ENCODE measurements at regions of chr3 and their contacts with region 1.

Region 1: DNA sequence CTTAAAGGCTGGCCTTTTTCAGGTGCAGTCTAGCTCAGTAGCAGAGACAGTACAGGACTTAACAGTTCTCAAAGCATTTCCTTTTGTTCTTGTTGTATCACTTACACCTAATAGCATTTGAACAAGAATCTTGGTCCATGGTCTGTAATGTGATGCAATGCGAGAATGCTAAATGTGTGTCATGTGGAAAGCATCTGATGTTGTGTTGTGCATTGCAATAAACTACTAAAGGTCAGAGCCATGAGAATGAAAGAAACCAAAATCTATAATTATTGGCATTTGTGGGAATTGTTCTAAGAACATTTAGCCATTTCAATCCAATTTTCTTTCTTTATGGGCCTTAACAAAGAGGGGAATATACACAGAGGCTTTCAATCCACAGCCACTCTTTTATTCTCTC is 324.5 kb upstream of the ROBO2 start:
- DNase-seq: no peak
- H3K4me3 ChIP-seq: no peak overlapping the region
- H3K27ac ChIP-seq: no peak overlapping the region
- H3K4me1 ChIP-seq: no peaks in the 10 kb centered on the region
- H3K27me3 ChIP-seq: no peaks in the 10 kb centered on the region
- CTCF ChIP-seq: no peak
- POLR2A ChIP-seq: no peak

Region 2: GRCh38 chr3:76651784-76652183 is 63.6 kb before region 1 on chr3:
- intact Hi-C with region 1: no loop called
- DNase-seq: no peak
- H3K4me3 ChIP-seq: no peak overlapping the region
- H3K27ac ChIP-seq: no peak overlapping the region
- H3K4me1 ChIP-seq: no peaks in the 10 kb centered on the region
- H3K27me3 ChIP-seq: no peaks in the 10 kb centered on the region
- CTCF ChIP-seq: no peak
- POLR2A ChIP-seq: no peak

Region 3: DNA sequence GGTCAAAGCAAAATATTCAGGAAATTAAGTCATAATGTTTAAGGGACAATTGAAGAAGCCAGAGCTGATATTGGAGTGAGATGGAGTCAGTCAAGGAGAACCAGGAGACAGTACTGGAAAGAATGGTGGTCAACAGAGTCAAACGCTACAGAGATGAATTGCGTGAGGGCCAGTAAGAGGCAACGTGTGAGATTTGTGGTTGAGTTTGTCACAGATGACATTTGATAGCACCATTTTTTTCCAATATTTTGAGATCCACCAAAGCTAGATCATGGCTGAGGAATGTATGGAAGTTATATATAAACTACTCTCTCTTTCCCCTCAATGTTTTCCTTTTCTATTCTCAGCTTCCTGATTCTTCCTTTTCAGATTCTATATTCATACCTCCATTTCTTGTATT is 50.6 kb before region 1 on chr3:
- intact Hi-C with region 1: loop called (anchors 1 kb)
- DNase-seq: no peak
- H3K4me3 ChIP-seq: no peak overlapping the region
- H3K27ac ChIP-seq: no peak overlapping the region
- H3K4me1 ChIP-seq: no peaks in the 10 kb centered on the region
- H3K27me3 ChIP-seq: no peaks in the 10 kb centered on the region
- CTCF ChIP-seq: no peak
- POLR2A ChIP-seq: no peak

Region 4: GRCh38 chr3:76765526-76765925 is 50.1 kb after region 1 on chr3:
- intact Hi-C with region 1: no loop called
- DNase-seq: no peak
- H3K4me3 ChIP-seq: no peak overlapping the region
- H3K27ac ChIP-seq: no peak overlapping the region
- H3K4me1 ChIP-seq: no peaks in the 10 kb centered on the region
- H3K27me3 ChIP-seq: no peaks in the 10 kb centered on the region
- CTCF ChIP-seq: no peak
- POLR2A ChIP-seq: no peak